HepG2 (cell line): ENCODE measurements at regions of chr1 and their contacts with region 1.

Region 1: DNA sequence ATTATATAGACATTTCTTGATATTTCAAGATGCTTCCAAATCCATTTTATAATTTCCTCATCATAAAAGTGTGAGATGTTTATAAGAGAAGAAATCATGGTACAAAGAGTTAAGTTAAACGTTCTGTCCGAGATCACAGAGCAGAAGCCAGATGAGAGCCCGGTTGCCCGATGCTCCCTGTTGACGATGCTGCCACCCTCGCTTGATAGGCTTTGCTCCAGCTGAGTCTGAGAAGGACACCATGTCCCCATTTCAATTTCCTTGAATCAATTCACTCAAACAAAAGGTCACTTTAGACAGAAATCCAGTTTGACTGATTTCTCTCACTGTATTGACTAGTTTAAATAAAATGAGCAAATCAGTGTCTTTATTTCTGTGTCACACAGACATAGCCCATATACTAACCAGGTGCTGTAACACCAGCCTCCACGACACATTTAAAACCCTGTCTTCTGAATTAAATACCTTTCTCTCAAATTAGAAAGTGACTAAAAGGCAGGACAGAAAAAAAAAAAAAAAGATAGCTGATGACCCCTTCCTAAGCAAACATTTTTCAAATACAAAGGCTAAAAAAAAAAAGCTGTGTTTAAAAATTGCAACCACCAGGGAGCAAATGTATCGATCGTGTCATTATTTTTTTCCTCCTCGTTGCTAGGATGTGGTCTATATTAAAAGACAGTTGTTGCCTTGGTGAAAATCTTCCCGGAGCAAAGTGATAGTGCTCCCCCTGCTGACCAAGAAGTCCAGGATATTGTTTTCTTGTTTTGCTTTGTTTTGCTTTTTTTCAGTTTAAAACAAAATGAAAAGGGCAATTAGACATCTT is 35.2 kb downstream of the DNASE2B start:
- DNase-seq: peak; percentile 30
- ATAC-seq: peak; percentile 61
- H3K4me3 ChIP-seq: no peak overlapping the region
- H3K27ac ChIP-seq: no peak overlapping the region
- H3K4me1 ChIP-seq: no peaks in the 10 kb centered on the region
- H3K27me3 ChIP-seq: no peaks in the 10 kb centered on the region
- CTCF ChIP-seq: peak; percentile 59
- EP300 ChIP-seq: no peak
- POLR2A ChIP-seq: no peak
- RAD21 ChIP-seq: no peak

Region 2: GRCh38 chr1:84122780-84123382 is 310.6 kb before region 1 on chr1:
- CTCF ChIA-PET with region 1: no interaction called
- POLR2A ChIA-PET with region 1: no interaction called
- in situ Hi-C with region 1: no loop called
- intact Hi-C with region 1: loop called (anchors 5 kb)
- DNase-seq: peak; percentile 38
- ATAC-seq: peak; percentile 81
- H3K4me3 ChIP-seq: no peak overlapping the region
- H3K27ac ChIP-seq: no peak overlapping the region
- H3K4me1 ChIP-seq: no peaks in the 10 kb centered on the region
- H3K27me3 ChIP-seq: no peaks in the 10 kb centered on the region
- CTCF ChIP-seq: peak; percentile 61
- EP300 ChIP-seq: no peak
- POLR2A ChIP-seq: no peak
- RAD21 ChIP-seq: no peak

Region 3: GRCh38 chr1:84690397-84691121 is 257.1 kb after region 1 on chr1 and contains the start of gene SSX2IP:
- CTCF ChIA-PET with region 1: no interaction called
- POLR2A ChIA-PET with region 1: no interaction called
- in situ Hi-C with region 1: no loop called
- intact Hi-C with region 1: no loop called
- DNase-seq: peak; percentile 92
- ATAC-seq: peak; percentile 91
- H3K4me3 ChIP-seq: peak within 1 kb of the TSS; percentile 85 to 90 (median 87)
- H3K27ac ChIP-seq: peak within 1 kb of the TSS; percentile 78
- H3K4me1 ChIP-seq: peaks cover 40% of the 10 kb centered on the region
- H3K27me3 ChIP-seq: no peaks in the 10 kb centered on the region
- CTCF ChIP-seq: no peak; the same call in 1 of the 2 replicates
- EP300 ChIP-seq: 0 out of 4 replicates have a peak, but pooled peaks of 1 of the 2 experiments have one; percentile 26
- POLR2A ChIP-seq: peak; percentile 51 to 59
- RAD21 ChIP-seq: no peak
- total RNA-seq, gene SSX2IP: 23.7 and 38.8 TPM in 2 replicates